CD4-positive, alpha-beta T cell (primary cell): ENCODE measurements at regions of chr3 and their contacts with region 1.

Region 1: GRCh38 chr3:53255775-53256703 is at the start of gene TKT:
- DNase-seq: peak; percentile 62 to 93 (median 76)
- ATAC-seq: peak; percentile 82
- H3K4me3 ChIP-seq: peak within 1 kb of the TSS; percentile 70
- H3K4me3 Mint-ChIP-seq: peak within 1 kb of the TSS; percentile 92
- H3K27ac ChIP-seq: peak within 1 kb of the TSS in 1 of 2 donors; percentile 13
- H3K27ac Mint-ChIP-seq: peak within 1 kb of the TSS; percentile 80
- H3K4me1 ChIP-seq: peaks cover 44% of the 10 kb centered on the region
- H3K4me1 Mint-ChIP-seq: peaks cover 39% of the 10 kb centered on the region
- H3K27me3 ChIP-seq: no peaks in the 10 kb centered on the region
- H3K27me3 Mint-ChIP-seq: no peaks in the 10 kb centered on the region
- CTCF ChIP-seq: no peak
- total RNA-seq, gene TKT: 91.5 to 103 TPM

Region 2: GRCh38 chr3:52763466-52763865 is 492.6 kb before region 1 on chr3:
- CTCF ChIA-PET with region 1: no interaction called
- POLR2A ChIA-PET with region 1: no interaction called
- intact Hi-C with region 1: no loop called
- DNase-seq: no peak
- ATAC-seq: no peak
- H3K4me3 ChIP-seq: no peak overlapping the region
- H3K4me3 Mint-ChIP-seq: no peak overlapping the region
- H3K27ac ChIP-seq: no peak overlapping the region
- H3K27ac Mint-ChIP-seq: no peak overlapping the region
- H3K4me1 ChIP-seq: no peaks in the 10 kb centered on the region
- H3K4me1 Mint-ChIP-seq: no peaks in the 10 kb centered on the region
- H3K27me3 ChIP-seq: no peaks in the 10 kb centered on the region
- H3K27me3 Mint-ChIP-seq: no peaks in the 10 kb centered on the region
- CTCF ChIP-seq: no peak

Region 3: DNA sequence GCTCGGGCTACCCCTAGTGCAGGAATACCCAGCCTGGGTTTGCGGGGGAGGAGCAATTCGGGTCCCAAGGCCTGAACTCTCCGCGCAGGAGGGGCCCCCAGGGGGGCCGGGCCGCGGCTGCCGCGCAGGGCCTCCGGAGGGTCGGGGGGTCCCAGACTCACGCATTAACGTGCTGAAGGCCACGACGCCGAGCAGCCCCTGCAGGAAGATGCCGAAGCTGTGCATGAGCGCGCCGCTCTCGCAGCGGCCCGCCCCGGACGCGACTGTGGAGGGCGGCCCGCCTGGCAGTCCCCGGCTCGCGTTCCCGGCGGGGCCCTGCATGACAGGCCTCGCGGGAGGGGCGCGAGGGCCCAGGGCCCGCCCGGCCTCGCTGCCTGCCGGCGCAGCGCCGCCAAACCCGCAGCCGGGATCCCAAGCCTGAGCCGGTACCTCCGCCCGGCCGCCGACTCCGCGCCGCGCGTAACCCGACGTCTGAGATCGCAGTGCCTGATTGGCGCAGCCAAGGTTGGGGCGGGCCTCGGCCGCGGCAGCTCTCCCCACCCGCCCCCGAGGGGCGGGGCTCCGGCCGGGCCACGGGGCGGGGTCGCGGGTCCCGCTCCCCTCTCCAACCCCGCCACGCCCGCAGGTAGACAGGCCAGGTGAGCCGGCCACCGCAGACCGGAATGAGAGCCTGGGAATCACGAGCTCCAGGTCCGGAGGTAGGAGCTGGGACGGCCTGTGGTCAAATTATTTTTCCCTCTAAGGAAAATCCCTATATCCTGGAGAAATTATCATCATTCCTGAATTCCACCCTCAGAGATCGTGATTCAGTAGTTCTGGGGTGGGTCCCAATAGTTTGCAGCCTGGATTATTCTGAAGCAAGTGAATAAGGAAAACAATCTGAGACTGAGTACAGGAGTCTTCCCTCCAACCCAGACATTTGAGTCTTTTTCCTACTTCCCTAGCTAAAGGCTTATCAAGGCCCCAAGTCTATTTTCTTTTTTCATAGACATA is 358.6 kb before region 1 on chr3 and contains the start of gene STIMATE:
- CTCF ChIA-PET with region 1: no interaction called
- POLR2A ChIA-PET with region 1: no interaction called
- intact Hi-C with region 1: loop called in 1 of 2 experiments (anchors 10 kb)
- DNase-seq: peak; percentile 64 to 96 (median 85)
- ATAC-seq: peak; percentile 88
- H3K4me3 ChIP-seq: peak within 1 kb of the TSS; percentile 69
- H3K4me3 Mint-ChIP-seq: peak within 1 kb of the TSS; percentile 98
- H3K27ac ChIP-seq: peak within 1 kb of the TSS; percentile 33 to 45
- H3K27ac Mint-ChIP-seq: peak within 1 kb of the TSS; percentile 82
- H3K4me1 ChIP-seq: peaks cover 49% of the 10 kb centered on the region
- H3K4me1 Mint-ChIP-seq: peaks cover 52% of the 10 kb centered on the region
- H3K27me3 ChIP-seq: no peaks in the 10 kb centered on the region
- H3K27me3 Mint-ChIP-seq: no peaks in the 10 kb centered on the region
- CTCF ChIP-seq: no peak
- total RNA-seq, gene STIMATE: 39.8 to 42.6 TPM

Region 4: DNA sequence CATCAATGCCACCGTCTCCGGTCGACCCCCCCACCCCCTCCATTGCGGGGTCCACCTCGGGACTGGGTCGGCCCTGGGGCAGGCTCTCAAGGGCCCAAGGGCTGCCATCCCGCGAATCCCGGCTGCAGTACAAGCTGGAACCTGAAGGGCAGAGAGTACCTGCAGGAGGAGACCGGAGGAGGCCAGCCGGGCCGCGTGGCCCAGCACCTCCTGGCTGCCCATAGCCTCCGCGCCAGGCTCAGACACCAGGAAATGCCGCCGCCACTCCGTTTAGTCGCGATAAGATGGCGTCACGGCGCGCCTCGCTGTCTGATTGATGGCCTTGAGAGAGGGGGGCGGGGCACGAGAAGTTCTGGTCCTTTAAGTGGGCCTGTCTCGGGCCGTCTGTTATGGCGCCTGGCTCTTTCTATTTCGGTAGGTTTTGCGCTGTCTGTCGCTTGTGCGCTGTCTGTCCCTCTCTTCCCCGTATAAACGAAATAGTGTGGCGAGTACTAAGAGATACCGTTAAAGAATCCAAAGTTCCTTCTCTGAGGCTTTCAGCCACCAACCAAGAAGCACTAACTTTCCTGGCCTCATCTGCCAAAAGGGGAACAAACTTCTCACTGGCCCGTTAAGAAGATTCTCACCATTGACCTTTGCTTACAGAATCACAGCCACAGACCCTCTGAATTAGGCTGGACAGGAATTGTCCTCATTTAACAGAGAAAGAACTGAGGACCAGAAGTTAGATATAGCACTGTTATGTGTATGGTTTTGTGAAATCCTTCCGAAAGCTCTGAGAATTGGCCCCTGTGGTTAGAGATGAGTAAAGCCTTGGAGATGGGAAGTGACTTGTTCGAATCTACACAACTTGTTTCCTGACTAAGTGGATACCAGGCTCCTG is 125.6 kb before region 1 on chr3 and contains the start of gene RFT1:
- CTCF ChIA-PET with region 1: no interaction called
- POLR2A ChIA-PET with region 1: no interaction called
- intact Hi-C with region 1: loop called in 1 of 2 experiments (anchors 5 kb)
- DNase-seq: peak; percentile 94 to 100 (median 98)
- ATAC-seq: peak; percentile 92
- H3K4me3 ChIP-seq: peak within 1 kb of the TSS; percentile 80
- H3K4me3 Mint-ChIP-seq: peak within 1 kb of the TSS; percentile 92
- H3K27ac ChIP-seq: peak within 1 kb of the TSS; percentile 93 to 95
- H3K27ac Mint-ChIP-seq: peak within 1 kb of the TSS; percentile 98
- H3K4me1 ChIP-seq: peaks cover 31% of the 10 kb centered on the region
- H3K4me1 Mint-ChIP-seq: peaks cover 26% of the 10 kb centered on the region
- H3K27me3 ChIP-seq: no peaks in the 10 kb centered on the region
- H3K27me3 Mint-ChIP-seq: no peaks in the 10 kb centered on the region
- CTCF ChIP-seq: no peak
- total RNA-seq, gene RFT1: 8.5 to 10.2 TPM

Region 5: GRCh38 chr3:53160660-53161449 is 95.2 kb before region 1 on chr3 and contains the start of gene PRKCD:
- CTCF ChIA-PET with region 1: no interaction called
- POLR2A ChIA-PET with region 1: no interaction called
- intact Hi-C with region 1: loop called in 1 of 2 experiments (anchors 2 kb)
- DNase-seq: peak; percentile 61 to 94 (median 78)
- ATAC-seq: peak; percentile 78
- H3K4me3 ChIP-seq: peak within 1 kb of the TSS; percentile 98
- H3K4me3 Mint-ChIP-seq: peak within 1 kb of the TSS; percentile 90
- H3K27ac ChIP-seq: peak within 1 kb of the TSS; percentile 47 to 58
- H3K27ac Mint-ChIP-seq: peak within 1 kb of the TSS; percentile 79
- H3K4me1 ChIP-seq: peaks cover 38% of the 10 kb centered on the region
- H3K4me1 Mint-ChIP-seq: peaks cover 22% of the 10 kb centered on the region
- H3K27me3 ChIP-seq: peaks cover 10 to 12% of the 10 kb centered on the region in 2 experiments
- H3K27me3 Mint-ChIP-seq: peaks cover 3% of the 10 kb centered on the region
- CTCF ChIP-seq: peak; percentile 41
- total RNA-seq, gene PRKCD: 18.1 to 20.1 TPM

Region 6: GRCh38 chr3:53274938-53275605 is 19.0 kb after region 1 on chr3:
- CTCF ChIA-PET with region 1: no interaction called
- POLR2A ChIA-PET with region 1: interaction called, 14 read pairs
- intact Hi-C with region 1: no loop called
- DNase-seq: peak in 7 of 14 experiments; percentile 10 to 33 (median 24)
- ATAC-seq: peak; percentile 95
- H3K4me3 ChIP-seq: no peak overlapping the region
- H3K4me3 Mint-ChIP-seq: peak overlapping the region; percentile 52
- H3K27ac ChIP-seq: no peak overlapping the region
- H3K27ac Mint-ChIP-seq: peak overlapping the region; percentile 82
- H3K4me1 ChIP-seq: no peaks in the 10 kb centered on the region
- H3K4me1 Mint-ChIP-seq: peaks cover 9% of the 10 kb centered on the region
- H3K27me3 ChIP-seq: no peaks in the 10 kb centered on the region
- H3K27me3 Mint-ChIP-seq: no peaks in the 10 kb centered on the region
- CTCF ChIP-seq: no peak

Region 7: GRCh38 chr3:53287131-53287629 is 31.1 kb after region 1 on chr3:
- CTCF ChIA-PET with region 1: no interaction called
- POLR2A ChIA-PET with region 1: no interaction called
- intact Hi-C with region 1: no loop called
- DNase-seq: no peak
- ATAC-seq: no peak
- H3K4me3 ChIP-seq: no peak overlapping the region
- H3K4me3 Mint-ChIP-seq: no peak overlapping the region
- H3K27ac ChIP-seq: no peak overlapping the region
- H3K27ac Mint-ChIP-seq: no peak overlapping the region
- H3K4me1 ChIP-seq: no peaks in the 10 kb centered on the region
- H3K4me1 Mint-ChIP-seq: no peaks in the 10 kb centered on the region
- H3K27me3 ChIP-seq: no peaks in the 10 kb centered on the region
- H3K27me3 Mint-ChIP-seq: no peaks in the 10 kb centered on the region
- CTCF ChIP-seq: no peak

Region 8: DNA sequence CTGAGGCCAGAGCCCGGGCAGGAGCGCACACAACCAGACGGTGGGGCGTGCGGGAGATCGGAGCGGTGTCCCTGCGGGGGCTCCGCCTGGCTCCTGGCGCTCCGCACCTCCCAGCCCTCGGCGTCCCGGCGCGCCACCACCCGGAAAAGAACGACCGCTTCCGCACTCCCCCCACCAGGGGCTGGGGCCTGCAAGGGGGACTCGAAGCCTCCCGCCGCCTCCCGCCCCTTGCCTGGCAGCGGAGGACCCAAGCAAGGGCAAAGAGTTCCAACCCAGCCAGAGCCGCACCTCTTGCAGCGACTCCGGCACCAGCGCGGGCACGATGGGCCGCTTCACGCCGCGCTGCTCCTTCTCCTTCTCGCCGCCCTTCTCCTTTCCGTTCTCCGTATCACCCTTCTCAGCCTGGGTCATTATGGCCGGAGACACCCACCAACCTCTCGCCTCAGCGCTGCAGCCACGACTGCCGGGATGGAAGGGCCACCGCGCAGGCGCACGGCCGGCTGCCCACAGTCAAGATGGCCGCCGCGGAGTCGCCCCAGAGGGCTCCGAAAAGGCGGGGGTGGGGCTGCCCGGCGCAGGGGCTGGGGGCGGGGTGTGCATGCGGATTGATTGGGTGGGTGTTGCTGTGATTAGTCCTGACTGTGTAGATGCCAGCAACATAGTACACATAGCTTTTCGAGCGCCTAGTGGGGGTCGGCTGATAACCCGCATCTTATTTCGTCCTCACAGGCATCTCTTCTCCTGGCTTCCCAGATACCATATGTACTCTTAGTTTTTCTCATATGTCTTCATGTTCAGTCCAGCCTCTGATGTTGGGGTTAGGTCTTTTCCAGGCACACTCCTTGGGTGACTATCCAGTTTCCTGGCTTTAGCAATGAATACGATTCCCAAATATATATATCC is 625.9 kb after region 1 on chr3 and contains the start of gene ACTR8:
- CTCF ChIA-PET with region 1: no interaction called
- POLR2A ChIA-PET with region 1: no interaction called
- intact Hi-C with region 1: loop called in 1 of 2 experiments (anchors 5 kb)
- DNase-seq: peak; percentile 73 to 91 (median 83)
- ATAC-seq: peak; percentile 88
- H3K4me3 ChIP-seq: peak within 1 kb of the TSS; percentile 82
- H3K4me3 Mint-ChIP-seq: peak within 1 kb of the TSS; percentile 100
- H3K27ac ChIP-seq: peak within 1 kb of the TSS; percentile 65 to 78
- H3K27ac Mint-ChIP-seq: peak within 1 kb of the TSS; percentile 93
- H3K4me1 ChIP-seq: peaks cover 21% of the 10 kb centered on the region
- H3K4me1 Mint-ChIP-seq: peaks cover 44% of the 10 kb centered on the region
- H3K27me3 ChIP-seq: no peaks in the 10 kb centered on the region
- H3K27me3 Mint-ChIP-seq: no peaks in the 10 kb centered on the region
- CTCF ChIP-seq: no peak
- total RNA-seq, gene ACTR8: 13.7 to 14.3 TPM